Psoas muscle (tissue), 8 donors: ENCODE measurements at regions of chr6 and their contacts with region 1.

Region 1: GRCh38 chr6:13328076-13328874 is at the start of gene TBC1D7:
- DNase-seq: peak; percentile 91 to 97
- ATAC-seq: peak; percentile 96 to 99 (median 97)
- H3K4me3 ChIP-seq: peak within 1 kb of the TSS; percentile 92
- H3K27ac ChIP-seq: peak within 1 kb of the TSS; percentile 95
- H3K4me1 ChIP-seq: peaks cover 3% of the 10 kb centered on the region
- H3K27me3 ChIP-seq: no peaks in the 10 kb centered on the region
- CTCF ChIP-seq: peak; percentile 20
- total RNA-seq, gene TBC1D7: 9.4 to 12.0 (median 10.3) TPM

Region 2: DNA sequence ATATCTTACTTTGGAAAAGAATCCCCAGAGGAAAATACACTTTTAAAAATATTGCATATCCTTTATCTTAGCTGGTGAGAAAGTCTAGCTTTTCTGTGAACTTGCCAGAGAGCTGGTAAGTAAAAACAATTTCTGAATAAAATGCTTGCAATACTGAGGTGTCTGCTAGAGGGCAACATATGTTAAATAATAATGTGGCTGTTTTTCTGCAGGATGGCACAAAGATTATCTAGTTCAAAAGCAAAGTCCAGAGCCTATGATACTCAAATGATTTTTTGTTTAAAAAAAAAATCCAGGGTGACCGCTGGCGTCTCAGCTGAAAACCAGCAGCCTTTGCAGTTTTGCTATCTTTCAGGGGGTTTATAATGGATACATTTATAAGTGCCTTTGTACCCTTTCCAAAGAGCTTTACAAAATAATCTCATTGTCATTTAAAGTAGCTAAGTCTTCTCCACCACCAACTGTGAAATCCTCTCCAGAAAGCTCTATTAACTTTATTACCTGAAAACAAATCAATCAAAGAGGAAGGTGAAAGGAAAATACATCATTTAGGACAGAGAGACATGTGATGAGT is 416.8 kb before region 1 on chr6:
- intact Hi-C with region 1: loop called (anchors 2 to 10 kb)
- DNase-seq: no peak
- ATAC-seq: no peak
- H3K4me3 ChIP-seq: no peak overlapping the region
- H3K27ac ChIP-seq: no peak overlapping the region
- H3K4me1 ChIP-seq: no peaks in the 10 kb centered on the region
- H3K27me3 ChIP-seq: no peaks in the 10 kb centered on the region
- CTCF ChIP-seq: peak; percentile 41

Region 3: DNA sequence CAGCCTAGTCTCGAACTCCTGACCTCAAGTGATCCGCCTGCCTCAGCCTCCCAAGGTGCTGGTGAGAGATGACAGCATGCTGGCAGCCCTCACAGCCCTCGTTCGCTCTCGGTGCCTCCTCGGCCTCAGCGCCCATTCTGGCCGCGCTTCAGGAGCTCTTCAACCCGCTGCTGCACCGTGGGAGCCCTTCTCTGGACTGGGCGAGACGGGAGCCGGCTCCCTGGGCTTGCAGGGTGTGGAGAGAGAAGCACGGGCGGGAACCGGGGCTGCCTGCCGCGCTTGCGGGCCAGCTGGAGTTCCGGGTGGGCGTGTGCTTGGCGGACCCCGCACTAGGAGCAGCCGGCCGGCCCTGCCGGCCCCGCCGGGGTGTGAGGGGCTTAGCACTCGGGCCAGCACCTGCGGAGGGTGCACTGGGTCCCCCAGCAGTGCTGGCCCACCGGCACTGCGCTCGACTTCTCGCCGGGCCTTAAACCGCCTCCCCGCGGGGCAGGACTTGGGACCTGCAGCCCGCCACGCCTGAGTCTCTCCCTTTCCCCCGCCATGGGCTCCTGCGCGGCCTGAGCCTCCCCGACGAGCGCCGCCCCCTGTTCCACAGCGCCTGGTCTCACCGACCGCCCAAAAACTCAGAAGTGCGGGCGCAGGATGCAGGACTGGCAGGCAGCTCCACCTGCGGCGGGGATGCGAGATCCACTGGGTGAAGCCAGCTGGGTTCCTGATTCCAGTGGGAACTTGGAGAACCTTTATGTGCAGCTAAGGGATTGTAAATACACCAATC is 414.9 kb after region 1 on chr6:
- intact Hi-C with region 1: no loop called
- DNase-seq: no peak
- ATAC-seq: no peak
- H3K4me3 ChIP-seq: peak overlapping the region; percentile 15
- H3K27ac ChIP-seq: no peak overlapping the region
- H3K4me1 ChIP-seq: no peaks in the 10 kb centered on the region
- H3K27me3 ChIP-seq: no peaks in the 10 kb centered on the region
- CTCF ChIP-seq: no peak